ENCODE measurements at regions of chr15 and their contacts with region 1.

Region 1: GRCh38 chr15:101127506-101128076 is 124.3 kb downstream of the CHSY1 start:
- DNase-seq: peak; percentile 85
- H3K4me3 ChIP-seq: peak overlapping the region; percentile 44
- H3K27ac ChIP-seq: peak overlapping the region; percentile 82
- H3K4me1 ChIP-seq: peaks cover 40% of the 10 kb centered on the region
- CTCF ChIP-seq: no peak

Region 2: GRCh38 chr15:100559330-100559729 is 568.3 kb before region 1 on chr15:
- CTCF ChIA-PET with region 1: no interaction called
- POLR2A ChIA-PET with region 1: no interaction called
- intact Hi-C with region 1: no loop called
- DNase-seq: no peak
- H3K4me3 ChIP-seq: no peak overlapping the region
- H3K27ac ChIP-seq: no peak overlapping the region
- H3K4me1 ChIP-seq: no peaks in the 10 kb centered on the region
- CTCF ChIP-seq: no peak

Region 3: GRCh38 chr15:101198800-101199199 is 71.2 kb after region 1 on chr15:
- CTCF ChIA-PET with region 1: no interaction called
- POLR2A ChIA-PET with region 1: no interaction called
- intact Hi-C with region 1: loop called (anchors 5 kb)
- DNase-seq: no peak
- H3K4me3 ChIP-seq: no peak overlapping the region
- H3K27ac ChIP-seq: no peak overlapping the region
- H3K4me1 ChIP-seq: peaks cover 27% of the 10 kb centered on the region
- CTCF ChIP-seq: no peak

Region 4: GRCh38 chr15:101242160-101242998 is 114.8 kb after region 1 on chr15:
- CTCF ChIA-PET with region 1: interaction called, 3 read pairs
- POLR2A ChIA-PET with region 1: interaction called, 7 read pairs
- intact Hi-C with region 1: loop called (anchors 1 kb)
- DNase-seq: peak; percentile 73
- H3K4me3 ChIP-seq: peak overlapping the region; percentile 48
- H3K27ac ChIP-seq: peak overlapping the region; percentile 51
- H3K4me1 ChIP-seq: peaks cover 48% of the 10 kb centered on the region
- CTCF ChIP-seq: no peak

Region 5: DNA sequence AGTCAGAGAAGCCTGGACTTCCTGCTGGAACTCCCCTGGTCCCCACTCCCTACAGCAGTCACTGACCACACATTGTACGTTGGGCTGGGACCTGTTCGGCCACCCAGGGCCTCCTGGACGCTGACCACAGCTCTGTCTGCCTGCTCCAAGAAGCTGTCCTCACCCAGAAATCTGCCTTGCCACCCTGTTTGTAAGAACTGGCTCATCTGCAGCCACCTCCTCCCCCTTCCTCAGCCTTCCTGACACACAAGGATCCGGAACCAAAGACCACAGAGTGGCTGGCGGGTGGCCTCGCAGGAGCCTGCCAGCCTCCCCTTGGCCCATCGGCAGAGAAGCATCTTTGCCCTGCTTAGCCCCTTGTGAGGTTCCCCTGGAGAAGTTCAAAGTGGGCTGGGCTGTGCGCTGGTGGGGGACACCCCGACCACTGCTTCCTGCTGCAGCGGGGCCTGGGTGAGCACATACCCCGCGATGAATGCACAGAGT is 270.0 kb after region 1 on chr15:
- CTCF ChIA-PET with region 1: no interaction called
- POLR2A ChIA-PET with region 1: no interaction called
- intact Hi-C with region 1: no loop called
- DNase-seq: no peak
- H3K4me3 ChIP-seq: no peak overlapping the region
- H3K27ac ChIP-seq: no peak overlapping the region
- H3K4me1 ChIP-seq: no peaks in the 10 kb centered on the region
- CTCF ChIP-seq: no peak

Measured in OCI-LY7 (cell line).